ENCODE measurements at regions of chr9 and their contacts with region 1.

Region 1: DNA sequence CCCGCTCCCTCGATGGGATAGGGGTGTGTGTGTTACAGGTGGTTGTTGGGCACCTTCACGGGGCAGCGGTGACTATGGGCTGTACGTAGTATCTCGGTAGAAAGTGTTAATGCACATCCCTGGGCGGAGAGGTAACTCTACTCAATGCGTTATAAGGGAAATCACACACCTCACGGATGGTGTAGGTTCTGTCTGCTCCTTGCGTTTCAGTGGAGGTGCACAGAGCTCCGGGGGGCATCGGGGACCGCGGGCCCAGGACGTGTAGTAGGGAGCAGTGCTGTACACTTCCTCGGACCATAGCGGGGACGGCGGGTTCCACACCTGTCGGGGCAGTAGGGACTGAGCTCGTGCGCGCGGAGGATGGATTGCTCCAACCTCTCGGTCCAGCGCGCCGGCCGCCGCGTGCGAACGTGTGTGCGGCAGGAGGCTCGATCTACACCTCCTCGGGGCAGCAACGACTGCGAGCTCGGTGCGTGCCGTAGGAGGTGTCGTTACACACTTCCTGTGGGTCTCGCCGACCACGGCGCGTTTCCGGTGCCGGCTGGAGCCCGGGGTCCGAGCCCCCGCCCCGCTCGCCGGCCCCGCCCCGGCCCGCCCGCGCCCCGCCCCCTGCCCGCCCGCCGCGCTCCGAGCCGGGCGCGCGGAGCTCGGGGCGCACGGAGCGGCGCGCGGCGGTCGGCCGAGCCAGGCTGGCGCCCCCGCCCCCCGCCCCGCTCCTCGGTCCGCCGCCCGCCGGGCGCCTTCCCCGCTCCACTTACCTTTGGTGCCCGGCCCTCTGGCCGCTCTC is at the start of gene KIAA1958:
- DNase-seq: peak; percentile 88
- H3K4me3 Mint-ChIP-seq: peak within 1 kb of the TSS; percentile 89
- H3K27ac Mint-ChIP-seq: peak within 1 kb of the TSS; percentile 95
- H3K4me1 Mint-ChIP-seq: peaks cover 42% of the 10 kb centered on the region
- H3K27me3 Mint-ChIP-seq: no peaks in the 10 kb centered on the region
- total RNA-seq, gene KIAA1958: 6.5 to 6.8 TPM

Region 2: GRCh38 chr9:112472996-112473395 is 13.4 kb before region 1 on chr9:
- CTCF ChIA-PET with region 1: interaction called, 10 read pairs
- POLR2A ChIA-PET with region 1: no interaction called
- DNase-seq: no peak
- H3K4me3 Mint-ChIP-seq: no peak overlapping the region
- H3K27ac Mint-ChIP-seq: no peak overlapping the region
- H3K4me1 Mint-ChIP-seq: no peaks in the 10 kb centered on the region
- H3K27me3 Mint-ChIP-seq: no peaks in the 10 kb centered on the region

Measured in activated CD4-positive, alpha-beta T cell treated with anti-CD3 and anti-CD28 coated beads, Interleukin-2, amount 10 ng/mL, durations not matched to agents 7 days and 5 days (primary cell).